ENCODE measurements at regions of chr1 and their contacts with region 1.

Region 1: GRCh38 chr1:40951943-40952743 is 27.4 kb upstream of the CTPS1 start:
- DNase-seq: peak; percentile 56
- H3K4me3 ChIP-seq: no peak overlapping the region
- H3K27ac ChIP-seq: no peak overlapping the region
- H3K4me1 ChIP-seq: peaks cover 6% of the 10 kb centered on the region
- H3K27me3 ChIP-seq: peaks cover 2 to 14% of the 10 kb centered on the region in 2 experiments
- CTCF ChIP-seq: peak; percentile 93 to 97
- POLR2A ChIP-seq: no peak

Region 2: DNA sequence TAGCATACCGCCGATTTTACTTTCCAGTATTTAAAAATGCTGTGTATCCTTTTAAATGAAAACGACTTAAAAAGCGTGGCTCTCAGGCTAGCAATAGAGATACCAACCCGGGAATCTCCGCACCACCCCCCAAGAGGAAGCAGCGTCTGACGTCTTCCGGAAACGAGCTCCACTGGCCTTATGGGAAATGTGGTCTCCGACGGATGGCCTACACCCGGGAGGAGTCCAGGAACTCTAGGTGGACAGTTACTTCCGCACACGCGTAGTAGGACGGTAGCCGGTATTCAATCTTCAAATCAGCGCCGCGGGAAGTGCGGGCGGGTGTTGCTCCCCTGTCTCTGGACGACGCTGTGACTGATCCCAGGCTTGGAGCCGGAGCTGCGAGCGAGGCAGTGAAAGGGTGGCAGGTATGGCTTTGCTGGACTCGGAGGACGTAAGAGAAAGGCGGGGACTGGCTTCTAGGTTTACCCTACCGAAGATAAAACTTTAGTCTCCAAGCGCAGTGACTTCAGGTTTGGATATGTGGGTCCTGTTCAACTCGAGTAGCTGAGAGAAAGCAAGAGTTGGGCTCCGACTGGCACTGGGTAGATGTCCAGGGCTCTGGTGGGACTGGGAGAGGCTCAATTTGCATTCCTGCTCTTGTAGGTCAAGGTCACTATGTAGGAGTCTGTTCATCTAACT is 420.6 kb before region 1 on chr1 and contains the start of gene ZNF684:
- CTCF ChIA-PET with region 1: interaction called, 13 read pairs
- POLR2A ChIA-PET with region 1: no interaction called
- dilution Hi-C with region 1: no loop called
- intact Hi-C with region 1: loop called (anchors 5 kb)
- DNase-seq: peak; percentile 92
- H3K4me3 ChIP-seq: peak within 1 kb of the TSS; percentile 59 to 84 (median 82)
- H3K27ac ChIP-seq: peak within 1 kb of the TSS; percentile 96
- H3K4me1 ChIP-seq: peaks cover 7% of the 10 kb centered on the region
- H3K27me3 ChIP-seq: peaks cover 0 to 2% of the 10 kb centered on the region in 2 experiments
- CTCF ChIP-seq: no peak
- POLR2A ChIP-seq: no peak
- total RNA-seq, gene ZNF684: 5.5 and 5.8 TPM in 2 replicates

Region 3: DNA sequence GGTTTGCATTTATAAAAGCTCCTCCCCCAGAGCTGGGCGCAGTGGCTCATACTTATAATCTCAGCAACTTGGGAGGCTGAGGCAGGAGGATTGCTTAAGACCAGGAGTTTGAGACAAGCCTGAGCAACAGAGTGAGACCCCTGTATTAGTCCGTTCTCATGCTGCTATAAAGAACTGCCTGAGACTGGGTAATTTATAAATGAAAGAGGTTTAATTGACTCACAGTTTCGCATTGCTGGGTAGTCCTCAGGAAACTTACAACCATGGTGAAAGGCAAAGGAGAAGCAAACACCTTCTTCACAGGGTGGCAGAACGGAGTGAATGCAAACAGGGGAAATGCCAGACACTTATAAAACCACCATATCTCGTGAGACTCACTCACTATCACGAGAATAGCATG is 368.2 kb before region 1 on chr1:
- CTCF ChIA-PET with region 1: no interaction called
- POLR2A ChIA-PET with region 1: no interaction called
- dilution Hi-C with region 1: no loop called
- intact Hi-C with region 1: no loop called
- DNase-seq: no peak
- H3K4me3 ChIP-seq: no peak overlapping the region
- H3K27ac ChIP-seq: no peak overlapping the region
- H3K4me1 ChIP-seq: no peaks in the 10 kb centered on the region
- H3K27me3 ChIP-seq: peaks cover 3 to 4% of the 10 kb centered on the region in 2 experiments
- CTCF ChIP-seq: no peak
- POLR2A ChIP-seq: no peak

Region 4: DNA sequence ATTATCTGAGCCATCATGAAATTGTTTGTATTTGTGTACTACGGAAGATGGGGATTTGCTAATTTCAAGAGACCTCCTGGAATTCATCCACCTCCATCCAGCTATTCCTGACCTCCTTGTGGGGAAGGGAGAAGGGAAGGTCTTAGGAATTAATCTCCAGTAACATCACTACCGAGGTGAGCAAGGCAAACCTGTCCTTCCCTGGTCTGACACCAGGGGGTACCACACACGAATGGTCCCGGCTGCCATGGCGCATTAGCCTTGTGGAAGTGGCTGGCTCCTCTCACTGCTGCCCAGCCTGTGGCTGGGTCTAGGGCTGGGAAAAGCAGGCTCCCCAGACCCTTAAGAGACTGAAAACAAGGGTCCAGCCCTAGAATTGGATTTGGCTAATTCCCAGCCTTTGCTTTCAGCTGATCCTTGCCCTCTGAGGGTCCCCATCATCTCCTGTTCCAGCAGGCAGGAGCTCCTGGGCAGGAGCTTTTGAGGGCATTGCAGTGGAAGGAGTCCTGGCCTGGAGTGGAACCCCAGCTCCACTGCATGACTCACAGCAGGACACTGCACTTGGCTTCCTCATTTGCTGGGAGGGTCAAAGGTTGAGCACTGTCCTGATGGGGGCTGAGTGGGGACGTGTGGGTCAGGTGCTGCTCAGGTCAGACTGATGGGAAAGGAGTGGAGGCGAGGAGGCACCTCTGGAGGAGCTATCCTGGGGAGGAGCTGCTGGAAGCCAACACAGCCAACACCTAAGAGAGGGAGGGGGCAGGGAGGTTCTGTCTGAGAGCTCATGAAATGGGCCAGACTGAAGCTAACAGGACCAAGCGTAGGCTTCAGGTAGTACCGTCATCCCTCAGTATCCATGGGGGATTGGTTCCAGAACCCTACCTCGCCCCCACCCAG is 321.4 kb before region 1 on chr1:
- CTCF ChIA-PET with region 1: interaction called, 46 read pairs
- POLR2A ChIA-PET with region 1: no interaction called
- dilution Hi-C with region 1: no loop called
- intact Hi-C with region 1: loop called (anchors 1 kb)
- DNase-seq: peak; percentile 51
- H3K4me3 ChIP-seq: no peak overlapping the region
- H3K27ac ChIP-seq: no peak overlapping the region
- H3K4me1 ChIP-seq: no peaks in the 10 kb centered on the region
- H3K27me3 ChIP-seq: peaks cover 0 to 4% of the 10 kb centered on the region in 2 experiments
- CTCF ChIP-seq: peak; percentile 62 to 73
- POLR2A ChIP-seq: no peak

Region 5: DNA sequence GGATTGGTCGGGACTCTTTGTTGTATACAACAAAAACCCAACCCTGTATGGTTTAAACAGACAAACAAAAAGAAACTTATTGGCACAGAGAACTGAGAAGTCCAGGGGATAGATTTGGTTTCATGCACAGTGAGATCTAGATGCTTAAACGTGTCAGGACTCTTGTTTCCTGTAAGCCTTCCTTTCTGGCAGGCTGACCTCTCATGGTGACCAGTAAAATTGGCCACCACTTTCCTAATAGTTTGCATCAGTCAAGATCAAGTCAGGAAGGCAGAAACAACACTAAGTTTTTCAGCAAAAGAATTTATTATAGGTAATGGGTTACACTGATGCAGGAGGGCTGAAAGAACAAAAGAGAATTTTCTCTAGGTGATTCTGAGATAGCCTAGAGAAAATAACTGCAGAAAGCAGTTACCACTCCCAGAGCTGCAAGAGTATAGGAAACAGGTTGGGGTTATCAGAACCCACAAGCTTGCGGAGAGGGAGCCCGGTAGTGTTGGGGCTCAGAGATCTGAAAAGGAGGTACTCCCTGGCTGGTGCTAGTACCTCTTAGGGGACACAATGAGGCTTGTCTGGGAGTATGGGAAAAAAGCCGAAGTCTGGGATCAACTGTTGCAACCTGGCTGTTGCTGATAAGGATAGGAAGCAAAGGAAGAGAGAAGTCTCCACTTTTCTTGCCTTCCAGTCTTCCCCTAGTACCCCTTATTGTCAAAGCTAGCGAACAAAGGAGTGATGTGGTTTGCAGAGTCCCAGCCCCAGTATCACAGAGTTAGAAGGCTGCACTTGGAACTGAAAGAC is 111.4 kb before region 1 on chr1:
- CTCF ChIA-PET with region 1: interaction called, 20 read pairs
- POLR2A ChIA-PET with region 1: no interaction called
- dilution Hi-C with region 1: no loop called
- intact Hi-C with region 1: no loop called
- DNase-seq: peak; percentile 22
- H3K4me3 ChIP-seq: no peak overlapping the region
- H3K27ac ChIP-seq: no peak overlapping the region
- H3K4me1 ChIP-seq: peaks cover 10% of the 10 kb centered on the region
- H3K27me3 ChIP-seq: peaks cover 24 to 29% of the 10 kb centered on the region in 2 experiments
- CTCF ChIP-seq: peak in 1 of 2 donors; percentile 1
- POLR2A ChIP-seq: no peak

Region 6: DNA sequence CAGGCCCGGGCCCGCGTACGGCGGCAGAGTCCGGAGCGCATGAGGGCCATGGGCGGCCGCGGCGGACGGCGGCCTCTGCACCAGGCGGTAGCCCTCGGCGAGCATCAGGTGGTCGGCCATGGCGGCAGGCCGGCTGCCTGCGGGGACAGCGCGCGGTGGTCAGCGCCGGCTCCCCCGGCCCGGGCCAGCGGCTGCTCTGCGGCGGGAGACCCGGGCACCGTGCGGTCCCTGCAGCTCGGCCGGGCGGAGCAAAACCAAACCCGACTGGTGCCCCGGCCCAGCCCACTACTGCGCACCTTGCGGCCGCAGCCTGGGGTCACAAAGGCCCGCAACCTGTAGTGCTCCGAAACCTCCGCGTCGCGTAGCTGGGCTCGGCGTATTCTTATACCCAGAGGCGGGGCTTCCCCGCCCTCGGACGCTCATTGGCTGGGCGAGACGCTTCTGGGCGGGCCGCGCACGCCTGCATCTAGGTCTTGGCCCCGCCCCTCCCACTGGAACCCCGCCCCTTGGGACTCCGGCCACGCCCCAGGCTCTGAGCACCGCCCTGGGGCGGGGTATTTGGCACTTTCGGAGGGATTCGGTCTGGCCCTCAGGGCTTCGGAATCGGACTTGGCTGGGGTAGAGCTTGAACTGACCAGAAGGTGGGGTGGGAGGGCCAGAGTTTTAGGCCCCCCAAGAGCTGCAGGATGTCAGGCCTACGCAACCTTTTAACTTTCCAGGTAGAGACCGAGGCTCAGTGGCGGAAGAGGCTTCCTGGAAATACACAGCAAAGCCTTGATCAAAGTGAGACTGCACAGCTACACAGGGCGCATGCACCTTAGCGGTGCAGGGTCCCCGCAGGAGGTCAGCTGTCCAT is 89.9 kb before region 1 on chr1 and contains the start of gene CITED4:
- CTCF ChIA-PET with region 1: interaction called, 898 read pairs
- POLR2A ChIA-PET with region 1: interaction called, 27 read pairs
- dilution Hi-C with region 1: no loop called
- intact Hi-C with region 1: loop called (anchors 1 kb)
- DNase-seq: peak; percentile 94
- H3K4me3 ChIP-seq: peak within 1 kb of the TSS; percentile 39 to 52 (median 47)
- H3K27ac ChIP-seq: peak within 1 kb of the TSS; percentile 4
- H3K4me1 ChIP-seq: peaks cover 10% of the 10 kb centered on the region
- H3K27me3 ChIP-seq: no peaks in the 10 kb centered on the region
- CTCF ChIP-seq: no peak
- POLR2A ChIP-seq: peak; percentile 94
- total RNA-seq, gene CITED4: 10.9 and 11.3 TPM in 2 replicates

Region 7: GRCh38 chr1:40939320-40940059 is 12.7 kb before region 1 on chr1:
- CTCF ChIA-PET with region 1: interaction called, 17 read pairs
- POLR2A ChIA-PET with region 1: no interaction called
- dilution Hi-C with region 1: no loop called
- intact Hi-C with region 1: no loop called
- DNase-seq: no peak
- H3K4me3 ChIP-seq: no peak overlapping the region
- H3K27ac ChIP-seq: no peak overlapping the region
- H3K4me1 ChIP-seq: peaks cover 4% of the 10 kb centered on the region
- H3K27me3 ChIP-seq: no peaks in the 10 kb centered on the region
- CTCF ChIP-seq: no peak
- POLR2A ChIP-seq: no peak

Region 8: GRCh38 chr1:40997096-40997495 is 45.0 kb after region 1 on chr1:
- CTCF ChIA-PET with region 1: interaction called, 22 read pairs
- POLR2A ChIA-PET with region 1: interaction called, 11 read pairs
- dilution Hi-C with region 1: no loop called
- intact Hi-C with region 1: no loop called
- DNase-seq: no peak
- H3K4me3 ChIP-seq: no peak overlapping the region
- H3K27ac ChIP-seq: no peak overlapping the region
- H3K4me1 ChIP-seq: no peaks in the 10 kb centered on the region
- H3K27me3 ChIP-seq: no peaks in the 10 kb centered on the region
- CTCF ChIP-seq: no peak
- POLR2A ChIP-seq: no peak